ENCODE measurements at regions of chr1 and their contacts with region 1.

Region 1: DNA sequence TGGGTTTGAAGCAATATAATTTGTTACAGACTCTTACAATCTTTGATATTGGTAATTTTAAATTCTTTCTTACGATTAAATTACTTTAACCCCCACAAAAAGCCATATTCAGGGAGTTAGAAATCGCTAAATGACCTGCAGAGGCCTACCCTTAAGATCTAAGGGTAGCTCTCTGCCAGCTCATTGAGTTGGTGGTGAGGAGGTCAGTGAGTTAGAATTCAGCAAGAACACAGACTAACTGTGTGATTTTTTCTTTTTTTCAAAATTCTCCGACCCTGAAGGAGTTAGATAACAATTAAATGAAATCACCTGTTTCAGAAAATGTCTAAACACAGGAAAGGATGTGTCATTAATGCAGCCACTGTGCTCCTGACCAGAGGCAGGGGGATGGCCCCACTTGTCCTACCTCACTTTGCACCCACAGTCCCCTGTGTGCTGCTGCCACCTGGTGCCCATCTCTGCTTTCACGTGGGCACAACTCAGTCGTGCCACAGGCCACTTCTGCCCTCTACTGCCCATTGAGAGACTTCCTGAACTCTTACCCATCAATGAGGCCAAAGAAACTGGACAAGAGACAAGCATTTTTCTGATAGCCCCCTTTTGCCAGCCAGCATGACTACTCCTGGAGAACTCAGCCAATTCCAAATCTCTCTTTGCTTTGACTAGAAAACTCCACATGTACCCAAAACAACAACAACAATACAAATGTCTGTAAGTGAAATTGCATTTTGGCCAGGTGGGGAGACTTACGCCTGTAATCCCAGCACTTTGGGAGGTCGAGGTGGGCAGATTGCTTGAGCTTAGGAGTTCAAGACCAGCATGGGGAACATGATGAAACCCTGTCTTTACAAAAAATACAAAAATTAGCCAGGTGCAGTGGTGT is 8.4 kb downstream of the CFAP45 start:
- DNase-seq: peak; percentile 65 to 90
- H3K4me3 ChIP-seq: no peak overlapping the region
- H3K27ac ChIP-seq: peak overlapping the region in 1 of 2 donors; percentile 68
- H3K4me1 ChIP-seq: peaks cover 6 to 10% of the 10 kb centered on the region in 2 donors
- H3K27me3 ChIP-seq: no peaks in the 10 kb centered on the region
- CTCF ChIP-seq: peak; percentile 97 to 99 (median 97)

Region 2: DNA sequence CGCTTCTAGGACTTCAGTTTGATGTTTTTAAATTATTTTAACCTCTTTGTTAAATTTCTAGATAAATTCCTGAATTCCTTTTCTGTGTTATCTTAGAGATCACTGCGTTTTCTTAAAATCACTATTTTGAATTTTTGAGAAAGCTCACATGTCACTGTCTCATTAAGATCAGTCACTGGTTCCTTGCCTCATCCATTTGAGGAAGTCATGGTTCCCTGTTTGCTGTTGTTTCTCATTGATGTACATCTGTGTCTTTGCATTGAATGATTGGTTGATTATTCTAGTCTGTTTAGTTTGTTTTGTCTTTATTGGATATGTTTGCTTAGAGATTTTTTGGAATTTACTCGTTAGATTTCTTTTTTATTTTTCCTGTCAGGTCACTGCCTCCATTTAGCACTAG is 227.3 kb before region 1 on chr1:
- intact Hi-C with region 1: no loop called
- DNase-seq: no peak
- H3K4me3 ChIP-seq: no peak overlapping the region
- H3K27ac ChIP-seq: no peak overlapping the region
- H3K4me1 ChIP-seq: no peaks in the 10 kb centered on the region
- H3K27me3 ChIP-seq: no peaks in the 10 kb centered on the region
- CTCF ChIP-seq: no peak

Region 3: DNA sequence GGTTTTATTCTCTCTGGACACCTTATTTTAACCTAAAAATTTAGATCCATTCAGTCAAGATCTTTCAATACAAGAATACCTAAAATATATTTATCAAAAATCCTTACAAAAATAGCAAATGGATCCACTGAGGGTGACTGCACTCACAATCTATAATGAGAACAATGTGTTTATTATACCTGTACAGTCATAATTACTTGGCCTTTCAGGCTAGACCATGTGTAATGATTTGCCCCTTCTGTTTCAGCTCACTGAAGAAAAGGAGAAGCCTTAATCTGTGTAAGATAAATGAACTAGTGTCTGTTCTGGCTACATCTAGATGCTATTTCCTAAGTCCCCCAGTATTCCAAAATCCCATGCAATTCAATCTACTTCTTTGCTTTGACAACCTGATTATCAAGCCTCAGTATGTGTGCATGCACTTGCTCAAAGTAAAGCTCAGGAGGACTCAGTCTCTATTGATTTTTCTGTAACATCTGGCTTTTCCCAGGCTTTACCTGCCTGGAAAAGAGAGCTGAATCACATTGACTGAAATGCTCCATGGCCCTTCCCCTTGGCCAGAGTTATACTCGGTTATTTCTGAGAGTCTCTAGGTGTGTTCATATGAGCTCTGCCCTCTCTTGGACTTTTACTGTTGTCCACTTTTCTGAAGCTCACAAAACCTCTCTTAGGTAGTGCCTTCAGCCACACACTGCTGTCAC is 204.8 kb before region 1 on chr1:
- intact Hi-C with region 1: no loop called
- DNase-seq: no peak
- H3K4me3 ChIP-seq: no peak overlapping the region
- H3K27ac ChIP-seq: no peak overlapping the region
- H3K4me1 ChIP-seq: no peaks in the 10 kb centered on the region
- H3K27me3 ChIP-seq: no peaks in the 10 kb centered on the region
- CTCF ChIP-seq: no peak

Region 4: DNA sequence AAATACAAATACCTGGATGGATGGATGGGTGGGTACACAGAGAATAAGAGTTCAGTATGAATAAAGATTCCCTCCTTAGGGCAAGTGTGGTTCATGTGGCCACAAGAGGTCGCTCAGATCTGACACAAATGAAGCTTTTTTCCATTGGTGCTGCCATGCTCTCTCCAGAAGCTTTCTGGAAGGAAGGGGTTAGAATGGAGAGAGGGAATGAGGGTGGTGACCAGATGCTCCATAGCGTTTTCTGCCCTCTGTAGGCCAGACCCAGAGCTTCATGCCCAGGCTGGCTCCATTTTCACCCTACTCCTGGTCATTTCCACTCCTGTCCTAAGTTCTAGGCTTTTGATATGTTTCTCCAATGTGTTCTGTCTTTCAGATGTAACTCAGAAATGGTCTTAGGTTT is 92.6 kb before region 1 on chr1:
- intact Hi-C with region 1: loop called (anchors 1 kb)
- DNase-seq: peak in 1 of 2 donors; percentile 75
- H3K4me3 ChIP-seq: no peak overlapping the region
- H3K27ac ChIP-seq: no peak overlapping the region
- H3K4me1 ChIP-seq: no peaks in the 10 kb centered on the region
- H3K27me3 ChIP-seq: no peaks in the 10 kb centered on the region
- CTCF ChIP-seq: peak; percentile 67 to 77 (median 69)

Region 5: DNA sequence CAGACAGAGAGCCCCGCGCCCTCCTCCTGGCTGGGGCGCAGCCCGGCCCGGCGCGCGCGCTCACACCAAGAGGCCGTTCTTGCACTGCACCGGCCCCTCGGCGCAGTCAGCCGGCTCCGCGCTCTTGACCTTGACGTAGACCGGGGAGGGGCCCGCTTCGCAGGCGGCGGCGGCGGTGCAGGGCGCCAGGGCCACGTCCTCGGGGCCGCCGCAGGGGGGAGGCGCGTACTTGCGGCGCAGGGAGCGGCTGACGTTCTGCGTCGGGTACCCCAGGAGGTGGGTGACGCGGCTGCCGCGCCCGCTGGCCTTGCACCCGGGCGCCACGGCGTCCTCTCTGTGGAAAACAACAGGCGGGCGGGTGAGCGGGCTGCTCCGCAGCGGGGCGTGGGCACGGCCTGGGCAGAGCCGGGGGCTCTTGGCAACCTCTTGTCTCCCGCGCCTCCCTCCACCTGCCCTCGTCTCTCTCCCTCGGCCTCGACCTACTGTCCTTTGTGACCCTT is 36.8 kb before region 1 on chr1:
- intact Hi-C with region 1: loop called (anchors 1 kb)
- DNase-seq: peak; percentile 32 to 92
- H3K4me3 ChIP-seq: peak overlapping the region; percentile 78 to 92
- H3K27ac ChIP-seq: peak overlapping the region; percentile 98
- H3K4me1 ChIP-seq: peaks cover 0 to 8% of the 10 kb centered on the region in 2 donors
- H3K27me3 ChIP-seq: no peaks in the 10 kb centered on the region
- CTCF ChIP-seq: peak in 1 of 3 experiments; percentile 22